PC-9 (cell line): ENCODE measurements at regions of chr3 and their contacts with region 1.

Region 1: GRCh38 chr3:188154014-188154808 is at the start of gene LPP:
- DNase-seq: peak; percentile 63 to 95
- H3K4me3 ChIP-seq: peak within 1 kb of the TSS; percentile 81
- H3K27ac ChIP-seq: peak within 1 kb of the TSS; percentile 78
- H3K4me1 ChIP-seq: peaks cover 49% of the 10 kb centered on the region
- H3K27me3 ChIP-seq: no peaks in the 10 kb centered on the region
- CTCF ChIP-seq: no peak
- total RNA-seq, gene LPP: 113 and 148 TPM in 2 replicates

Region 2: DNA sequence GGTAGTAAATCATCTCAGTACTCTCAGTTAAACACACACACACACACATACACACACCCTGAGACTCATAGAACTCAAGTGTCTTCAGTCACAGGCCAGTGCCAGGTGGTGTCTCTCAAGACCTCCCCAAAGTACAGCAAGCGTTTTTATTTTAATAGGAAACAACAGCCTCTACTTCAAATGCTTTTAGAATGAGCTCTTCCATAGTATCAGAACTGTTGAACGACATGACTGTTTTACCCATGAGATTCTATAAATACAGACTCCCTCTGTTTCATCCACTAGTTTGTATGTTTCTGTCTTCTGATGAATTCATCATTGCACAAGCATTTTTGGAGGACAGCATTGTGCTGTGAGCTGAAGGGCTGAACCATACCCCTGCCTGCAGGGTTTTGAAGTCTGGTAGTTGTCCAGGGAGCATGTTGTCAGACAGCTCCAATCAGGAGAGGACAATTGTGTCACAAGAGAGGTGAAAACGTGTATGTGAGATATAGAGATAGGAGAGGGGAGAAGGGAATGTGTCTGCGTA is 208.0 kb before region 1 on chr3:
- CTCF ChIA-PET with region 1: no interaction called
- POLR2A ChIA-PET with region 1: no interaction called
- intact Hi-C with region 1: loop called (anchors 2 kb)
- DNase-seq: peak in 1 of 2 experiments; percentile 57
- H3K4me3 ChIP-seq: peak overlapping the region; percentile 45; the same call in 1 of the 2 replicates
- H3K27ac ChIP-seq: peak overlapping the region; percentile 94
- H3K4me1 ChIP-seq: peaks cover 67% of the 10 kb centered on the region
- H3K27me3 ChIP-seq: no peaks in the 10 kb centered on the region
- CTCF ChIP-seq: no peak

Region 3: DNA sequence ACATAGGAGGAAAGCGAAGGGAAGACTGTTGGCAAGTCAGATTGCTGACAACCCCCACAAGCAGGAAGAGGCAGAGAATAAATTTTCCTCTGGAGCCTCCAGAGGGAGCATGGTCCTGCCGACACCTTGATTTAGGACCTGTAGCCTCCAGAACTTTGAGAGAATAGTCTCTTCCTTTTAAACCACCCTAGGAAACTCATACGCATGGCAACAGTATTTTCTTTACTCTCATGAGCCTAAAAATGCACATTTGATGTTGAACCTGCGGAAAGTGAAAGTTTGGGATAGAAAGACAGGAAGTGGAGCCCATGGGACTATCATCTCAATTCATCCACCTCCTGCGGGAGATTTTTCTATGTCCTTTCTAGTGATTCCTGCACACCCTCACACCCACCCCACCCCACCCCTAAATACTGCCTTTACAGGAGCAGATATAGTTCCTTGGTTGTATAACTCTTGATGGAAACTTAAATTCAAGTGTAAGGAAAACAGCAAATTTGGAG is 116.9 kb before region 1 on chr3:
- CTCF ChIA-PET with region 1: no interaction called
- POLR2A ChIA-PET with region 1: no interaction called
- intact Hi-C with region 1: loop called (anchors 2 kb)
- DNase-seq: peak in 1 of 2 experiments; percentile 36
- H3K4me3 ChIP-seq: no peak overlapping the region
- H3K27ac ChIP-seq: peak overlapping the region; percentile 35
- H3K4me1 ChIP-seq: peaks cover 47% of the 10 kb centered on the region
- H3K27me3 ChIP-seq: no peaks in the 10 kb centered on the region
- CTCF ChIP-seq: peak; percentile 64

Region 4: DNA sequence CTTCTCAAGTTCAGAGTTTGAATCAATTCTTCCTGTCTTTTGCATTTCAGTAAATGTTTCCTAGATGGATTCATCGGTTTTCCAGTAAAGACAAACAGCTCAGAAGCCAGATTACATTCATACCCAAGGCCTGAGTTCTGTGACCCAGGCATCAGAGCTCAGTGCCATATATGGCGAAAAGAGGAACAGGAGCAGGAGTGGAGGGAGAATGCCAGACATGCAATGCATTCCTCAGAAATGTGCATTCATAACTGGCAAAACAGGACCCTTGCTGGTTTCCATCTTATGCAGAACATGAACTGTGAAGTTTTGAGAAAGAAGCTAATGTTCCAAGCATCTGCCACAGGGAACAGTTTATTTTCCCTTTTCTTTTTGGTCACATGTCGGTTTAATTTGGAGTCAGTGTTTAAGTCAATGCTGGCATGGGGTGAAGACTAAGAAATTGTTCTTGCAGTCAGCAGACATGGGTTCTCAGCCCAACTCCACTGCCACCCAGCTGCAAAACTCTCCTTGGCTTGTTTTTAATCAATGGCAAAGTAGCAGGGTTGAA is 116.3 kb after region 1 on chr3:
- CTCF ChIA-PET with region 1: no interaction called
- POLR2A ChIA-PET with region 1: interaction called, 4 read pairs
- intact Hi-C with region 1: loop called (anchors 1 kb)
- DNase-seq: peak; percentile 80 to 87
- H3K4me3 ChIP-seq: no peak overlapping the region
- H3K27ac ChIP-seq: no peak overlapping the region
- H3K4me1 ChIP-seq: peaks cover 43% of the 10 kb centered on the region
- H3K27me3 ChIP-seq: no peaks in the 10 kb centered on the region
- CTCF ChIP-seq: no peak

Region 5: DNA sequence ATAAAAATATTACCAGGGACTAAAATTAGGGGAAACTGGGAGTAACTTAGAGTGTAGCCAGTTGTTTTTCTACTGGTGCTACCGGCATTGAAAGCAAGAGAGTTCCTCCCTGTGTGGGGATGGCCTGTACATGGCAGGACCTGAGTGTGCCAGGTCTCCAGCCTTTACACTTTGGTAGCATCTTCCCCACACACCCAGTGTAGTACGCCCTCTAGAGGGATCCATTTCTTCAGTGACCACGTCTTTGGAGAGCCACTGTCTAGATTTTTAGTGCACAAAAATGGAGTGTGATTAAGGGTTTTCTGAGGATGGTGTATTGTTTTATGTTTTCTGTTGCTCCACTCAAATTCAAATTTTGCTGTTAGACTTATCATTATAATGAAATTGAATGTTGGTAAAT is 510.6 kb after region 1 on chr3:
- CTCF ChIA-PET with region 1: no interaction called
- POLR2A ChIA-PET with region 1: interaction called, 10 read pairs
- intact Hi-C with region 1: no loop called
- DNase-seq: no peak
- H3K4me3 ChIP-seq: no peak overlapping the region
- H3K27ac ChIP-seq: no peak overlapping the region
- H3K4me1 ChIP-seq: no peaks in the 10 kb centered on the region
- H3K27me3 ChIP-seq: no peaks in the 10 kb centered on the region
- CTCF ChIP-seq: peak; percentile 38; the same call in 1 of the 2 replicates

Region 6: DNA sequence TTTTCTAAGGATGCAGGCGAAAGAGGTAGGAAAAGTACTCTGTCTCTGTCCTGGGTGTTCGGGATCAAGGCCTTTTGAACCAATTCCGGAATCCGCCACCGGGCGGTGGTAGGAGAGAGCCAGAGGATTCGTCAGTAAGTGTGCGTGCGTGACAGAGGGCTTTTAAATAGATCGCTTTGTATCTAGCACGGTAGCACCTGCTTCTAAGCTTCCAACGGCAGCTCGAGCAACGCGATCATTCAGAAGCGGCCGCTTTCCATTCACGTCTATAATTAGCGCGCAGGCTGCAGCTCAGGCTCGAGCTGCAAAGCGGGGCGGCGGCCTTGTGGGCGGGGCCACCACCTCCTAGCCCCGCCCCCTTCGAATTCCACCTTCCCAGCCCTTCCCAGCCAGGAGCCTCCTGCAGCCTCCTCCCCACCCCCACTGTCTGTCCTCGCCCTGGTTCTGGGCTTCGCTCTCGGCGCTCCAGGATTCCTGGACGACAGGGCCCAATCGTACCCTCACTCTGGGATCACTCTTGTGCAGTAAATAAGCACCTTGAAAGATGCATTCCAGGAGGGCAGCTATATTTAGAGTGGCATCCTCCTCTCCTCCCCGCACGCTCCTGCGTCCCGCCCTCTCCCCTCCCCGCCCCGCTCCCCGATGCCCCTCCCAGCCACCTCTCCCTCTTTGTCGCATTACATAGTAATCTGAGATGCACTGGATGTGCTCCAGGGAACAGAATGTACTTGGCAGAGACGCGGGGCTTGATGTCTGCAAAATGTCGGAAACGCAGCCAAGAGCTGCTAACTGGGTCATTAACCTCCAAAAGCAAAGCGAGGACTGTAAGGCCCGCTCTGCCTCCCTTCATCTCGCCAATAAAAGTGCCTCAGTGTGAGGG is 793.4 kb after region 1 on chr3:
- CTCF ChIA-PET with region 1: no interaction called
- POLR2A ChIA-PET with region 1: interaction called, 5 read pairs
- intact Hi-C with region 1: loop called (anchors 2 kb)
- DNase-seq: peak; percentile 88 to 95
- H3K4me3 ChIP-seq: peak overlapping the region; percentile 57
- H3K27ac ChIP-seq: peak overlapping the region; percentile 7; the same call in 1 of the 2 replicates
- H3K4me1 ChIP-seq: peaks cover 39% of the 10 kb centered on the region
- H3K27me3 ChIP-seq: no peaks in the 10 kb centered on the region
- CTCF ChIP-seq: peak; percentile 66